Panc1 (cell line): ENCODE measurements at regions of chr5 and their contacts with region 1.

Region 1: GRCh38 chr5:61409568-61409967 is 77.5 kb downstream of the ZSWIM6 start:
- DNase-seq: no peak
- ATAC-seq: peak; percentile 55; the same call in 1 of the 2 replicates
- H3K4me3 ChIP-seq: peak overlapping the region; percentile 43 to 55; a peak in 2 of 4 replicates
- H3K27ac ChIP-seq: peak overlapping the region; percentile 86
- H3K4me1 ChIP-seq: peaks cover 19% of the 10 kb centered on the region; the same call in 1 of the 2 replicates
- H3K27me3 ChIP-seq: no peaks in the 10 kb centered on the region
- CTCF ChIP-seq: no peak

Region 2: GRCh38 chr5:61440086-61440485 is 30.5 kb after region 1 on chr5:
- CTCF ChIA-PET with region 1: no interaction called
- POLR2A ChIA-PET with region 1: interaction called, 18 read pairs
- in situ Hi-C with region 1: no loop called
- intact Hi-C with region 1: no loop called
- DNase-seq: no peak
- ATAC-seq: no peak
- H3K4me3 ChIP-seq: no peak overlapping the region
- H3K27ac ChIP-seq: no peak overlapping the region
- H3K4me1 ChIP-seq: no peaks in the 10 kb centered on the region
- H3K27me3 ChIP-seq: no peaks in the 10 kb centered on the region
- CTCF ChIP-seq: no peak